ENCODE measurements at regions of chr7 and their contacts with region 1.

Region 1: DNA sequence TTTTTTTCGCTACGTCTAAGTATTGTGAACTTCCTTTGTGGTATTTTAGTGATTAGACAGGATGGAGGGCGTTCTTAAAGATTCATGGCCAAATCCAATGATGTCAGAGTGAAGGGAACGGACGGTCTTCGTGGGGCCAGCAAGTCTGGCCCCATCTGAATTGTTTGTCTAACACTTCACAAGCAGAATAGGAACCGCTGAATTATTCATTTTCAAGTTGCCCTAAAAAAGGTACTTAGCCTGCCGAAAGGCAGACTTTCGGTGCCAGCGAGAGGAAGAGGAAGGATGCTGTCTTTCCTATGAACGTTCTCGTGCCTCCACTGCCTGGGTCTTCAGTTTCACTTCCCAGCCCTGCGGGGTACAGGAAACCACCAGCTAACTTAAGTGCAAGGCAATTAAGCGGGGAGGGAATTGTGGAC is 145.7 kb upstream of the SH2B2 start:
- DNase-seq: no peak
- ATAC-seq: peak; percentile 34

Region 2: DNA sequence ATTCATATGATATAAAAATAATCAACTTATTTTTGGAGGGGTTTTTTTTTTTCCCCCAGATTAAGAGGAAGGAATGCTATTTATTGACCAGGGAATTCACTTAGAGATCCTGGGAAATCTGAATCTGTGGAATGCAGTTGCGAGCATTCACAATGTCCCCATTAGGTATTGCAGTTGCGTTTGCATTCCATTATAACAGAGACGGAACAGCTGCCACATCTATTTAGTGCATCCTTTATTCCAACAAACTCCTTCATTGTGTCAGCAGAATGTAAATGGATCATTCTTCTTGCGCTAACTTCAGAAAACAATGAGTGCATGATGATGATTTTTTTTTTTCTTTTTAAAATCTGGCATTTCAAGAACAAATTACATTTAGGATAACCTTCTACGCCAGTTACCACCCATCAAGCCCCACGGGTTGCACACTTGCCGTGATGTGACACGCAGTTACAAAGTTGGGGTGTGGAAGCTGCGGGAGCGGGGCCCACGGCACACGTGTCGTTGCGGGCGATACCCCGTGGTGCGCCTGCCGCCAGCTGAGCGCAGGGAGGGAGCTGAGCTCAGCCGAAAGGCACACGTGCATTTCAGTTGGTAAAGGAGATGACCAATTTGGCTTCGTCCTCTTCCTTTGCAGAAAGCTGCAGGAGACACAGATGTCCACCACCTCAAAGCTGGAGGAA is 29.8 kb before region 1 on chr7:
- intact Hi-C with region 1: loop called (anchors 1 kb)
- DNase-seq: peak; percentile 64
- ATAC-seq: peak; percentile 70

Region 3: DNA sequence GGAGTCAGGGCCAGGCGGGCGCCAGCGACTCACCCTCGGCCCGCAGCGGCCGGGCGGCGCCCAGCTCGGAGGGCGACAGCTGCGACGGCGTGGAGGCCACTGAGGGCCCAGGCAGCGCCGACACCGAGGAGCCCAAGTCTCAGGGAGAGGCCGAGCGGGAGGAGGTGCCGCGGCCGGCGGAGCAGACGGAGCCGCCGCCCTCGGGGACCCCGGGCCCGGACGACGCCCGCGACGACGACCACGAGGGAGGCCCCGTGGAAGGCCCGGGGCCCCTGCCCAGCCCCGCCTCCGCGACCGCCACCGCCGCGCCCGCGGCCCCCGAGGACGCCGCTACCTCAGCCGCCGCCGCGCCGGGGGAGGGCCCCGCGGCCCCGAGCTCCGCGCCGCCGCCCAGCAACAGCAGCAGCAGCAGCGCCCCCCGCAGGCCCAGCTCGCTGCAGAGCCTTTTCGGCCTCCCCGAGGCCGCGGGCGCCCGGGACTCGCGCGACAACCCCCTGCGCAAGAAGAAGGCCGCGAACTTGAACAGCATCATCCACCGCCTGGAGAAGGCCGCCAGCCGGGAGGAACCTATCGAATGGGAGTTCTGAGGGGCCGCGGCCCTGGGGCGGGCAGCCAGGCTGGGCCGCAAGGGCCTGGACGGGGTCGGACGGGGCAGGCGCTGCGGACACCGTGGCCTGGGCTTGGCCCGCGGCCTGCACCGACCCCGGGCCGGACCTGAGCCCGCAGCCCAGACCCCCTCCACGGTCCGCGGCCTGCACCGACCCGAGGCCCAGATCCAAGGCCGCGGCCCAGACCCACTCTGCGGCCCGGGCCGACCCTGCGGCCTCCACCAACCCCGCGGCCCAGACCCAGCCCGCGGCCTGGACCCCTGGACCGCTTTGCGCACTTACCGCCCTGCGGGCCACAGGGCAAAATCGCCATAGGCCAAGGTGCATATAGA is 107.8 kb after region 1 on chr7:
- intact Hi-C with region 1: no loop called
- DNase-seq: no peak
- ATAC-seq: no peak

Measured in sciatic nerve (tissue), 2 donors.